Sciatic nerve (tissue), 2 donors: ENCODE measurements at regions of chr6 and their contacts with region 1.

Region 1: GRCh38 chr6:1609648-1610496 is at the start of gene FOXC1:
- DNase-seq: peak; percentile 95
- ATAC-seq: peak; percentile 92
- total RNA-seq, gene FOXC1: 61.8 TPM

Region 2: DNA sequence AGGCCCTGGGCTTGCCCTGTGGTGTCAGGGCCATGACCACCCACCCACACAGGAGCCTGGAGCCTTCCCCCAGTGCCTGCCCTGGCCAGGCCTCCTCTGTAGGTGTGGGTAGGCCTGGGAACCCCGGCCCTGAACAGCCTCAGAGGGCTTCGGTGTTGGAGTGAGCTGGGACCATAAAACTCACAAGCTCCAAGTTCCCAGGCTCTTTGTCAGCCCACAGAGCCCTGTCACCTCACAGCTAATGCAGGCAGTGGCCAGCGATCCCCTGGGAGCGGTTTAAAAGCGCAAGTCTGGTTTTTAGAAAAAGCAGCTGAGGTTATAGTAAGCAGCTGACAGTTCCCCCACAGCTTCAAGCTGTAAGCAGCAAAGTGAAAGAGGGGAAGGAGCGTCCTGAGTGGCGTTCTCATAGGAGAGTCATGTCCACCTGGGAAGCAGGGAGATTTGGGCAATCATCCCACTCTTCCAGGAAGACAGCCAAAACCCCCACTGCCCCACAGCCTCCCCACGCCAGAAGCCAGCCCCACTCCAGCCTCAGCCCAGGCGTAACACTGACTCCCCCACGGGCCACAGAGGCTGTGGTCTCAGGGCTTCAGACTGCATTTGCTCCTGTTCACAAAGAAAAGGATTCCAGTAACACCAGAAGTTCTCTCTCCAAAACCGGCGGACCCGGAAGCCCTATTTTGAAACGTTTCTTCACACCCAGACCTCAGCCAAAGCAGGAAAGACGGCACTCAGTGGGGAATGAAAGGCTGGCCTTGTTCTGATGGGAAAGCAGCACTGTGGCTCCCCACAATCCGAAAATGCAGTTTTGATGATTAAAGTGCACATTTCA is 34.4 kb before region 1 on chr6:
- intact Hi-C with region 1: no loop called
- DNase-seq: no peak
- ATAC-seq: peak; percentile 75

Region 3: DNA sequence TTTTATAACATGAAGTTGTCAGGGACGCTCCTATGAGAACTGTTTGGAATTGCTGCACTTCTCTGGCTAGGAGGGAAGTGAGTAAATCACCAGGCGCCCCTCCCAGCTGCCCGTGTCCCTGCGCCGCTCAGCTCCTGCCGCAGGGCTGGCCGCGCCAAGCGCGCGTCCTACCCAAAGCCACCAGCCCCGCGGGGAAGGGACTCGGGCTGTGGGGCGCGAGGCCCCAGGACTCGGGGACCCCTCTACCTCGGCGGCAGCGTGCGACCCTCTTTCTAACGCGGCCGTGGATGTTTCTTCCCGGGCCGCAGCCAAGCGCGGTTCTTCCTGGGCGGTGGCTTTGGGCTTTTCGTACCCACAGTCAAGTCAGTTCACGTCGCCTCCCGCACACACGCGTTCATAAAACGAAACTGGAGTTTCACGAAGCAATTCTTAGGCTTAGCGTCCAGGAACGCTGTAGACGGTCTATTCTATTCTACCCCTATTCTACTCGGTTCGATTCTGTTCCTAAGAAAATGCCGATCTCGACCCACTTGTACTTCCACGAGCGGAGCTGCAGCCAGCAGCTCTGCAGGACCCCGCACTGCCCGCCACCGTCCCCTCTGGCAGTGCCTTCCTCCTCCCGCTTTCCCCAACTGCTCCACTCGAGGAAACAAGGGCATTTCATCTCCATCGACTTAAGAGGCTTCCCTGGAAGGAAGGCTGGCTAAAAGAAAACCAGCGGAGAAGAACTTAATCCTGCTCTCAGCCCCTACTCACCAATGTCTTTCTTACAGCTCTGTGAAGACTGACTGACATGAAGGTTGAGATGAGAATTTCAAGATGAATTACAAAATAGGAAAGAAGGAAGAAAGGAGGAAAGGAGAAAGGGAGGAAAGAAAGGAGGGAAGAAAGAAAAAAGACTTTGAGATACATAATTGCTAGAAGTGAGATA is 15.2 kb after region 1 on chr6:
- intact Hi-C with region 1: loop called (anchors 2 kb)
- DNase-seq: no peak
- ATAC-seq: peak; percentile 56

Region 4: DNA sequence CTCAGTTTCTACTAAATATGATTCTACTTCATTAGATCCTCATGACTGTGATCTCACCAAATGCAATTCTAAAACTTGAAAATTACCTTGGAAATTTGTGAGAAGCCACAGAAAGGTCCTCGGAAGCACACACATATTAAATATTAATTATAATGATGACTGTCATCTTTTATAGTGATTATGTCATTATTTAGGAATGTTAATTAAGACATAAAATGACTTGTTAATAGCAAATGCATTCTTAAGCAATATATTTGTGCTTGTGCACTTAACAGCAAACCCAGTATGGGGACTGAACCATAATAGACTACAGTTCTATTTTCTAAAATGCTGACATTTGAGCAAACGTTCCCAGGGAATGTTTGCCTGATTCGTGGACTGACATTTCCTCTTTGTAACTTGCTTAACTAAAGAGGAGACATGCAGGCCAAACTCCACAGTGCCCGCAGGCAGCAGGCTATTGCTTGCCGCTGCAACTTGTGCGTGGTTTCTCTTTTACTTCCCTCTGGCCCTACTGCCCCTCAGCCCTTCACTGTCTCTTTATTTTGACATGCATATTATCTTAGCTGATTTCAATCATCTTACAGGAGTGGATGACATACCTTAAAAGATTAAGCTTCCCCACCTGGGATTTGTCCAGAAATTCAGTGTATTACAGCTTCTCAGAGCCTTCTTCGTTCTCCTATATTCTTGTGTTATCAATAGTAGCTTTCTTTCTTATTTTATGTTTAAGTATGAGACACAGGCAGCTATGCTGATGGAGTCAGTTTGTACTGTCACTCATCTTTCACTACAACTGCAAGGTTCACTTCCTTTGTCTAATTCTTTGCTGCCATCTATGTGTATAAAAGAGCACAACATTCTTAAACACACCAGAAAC is 494.0 kb after region 1 on chr6:
- intact Hi-C with region 1: loop called (anchors 5 kb)
- DNase-seq: no peak
- ATAC-seq: peak; percentile 89